ENCODE measurements at regions of chr2 and their contacts with region 1.

Region 1: GRCh38 chr2:133780099-133780839 is 212.0 kb upstream of the NCKAP5 start:
- DNase-seq: peak in 3 of 5 donors; percentile 32 to 45 (median 42)
- ATAC-seq: peak in 3 of 4 donors; percentile 46 to 74 (median 50)
- H3K4me3 ChIP-seq: no peak overlapping the region
- H3K27ac ChIP-seq: no peak overlapping the region
- H3K4me1 ChIP-seq: peaks cover 0 to 8% (median under 1%) of the 10 kb centered on the region in 12 donors
- H3K27me3 ChIP-seq: no peaks in the 10 kb centered on the region
- CTCF ChIP-seq: peak; percentile 57 to 87 (median 74)
- POLR2A ChIP-seq: no peak

Region 2: GRCh38 chr2:133266041-133266925 is 514.0 kb before region 1 on chr2:
- intact Hi-C with region 1: loop called in 2 of 10 experiments (anchors 5 to 10 kb)
- DNase-seq: peak in 1 of 5 donors; percentile 38
- ATAC-seq: peak; percentile 36 to 57 (median 50)
- H3K4me3 ChIP-seq: peak overlapping the region; percentile 26 to 60 (median 48)
- H3K27ac ChIP-seq: peak overlapping the region in 4 of 12 donors; percentile 15 to 46 (median 40)
- H3K4me1 ChIP-seq: peaks cover 0 to 27% (median 0%) of the 10 kb centered on the region in 12 donors
- H3K27me3 ChIP-seq: peaks cover 0 to 10% (median 0%) of the 10 kb centered on the region in 9 donors
- CTCF ChIP-seq: no peak
- POLR2A ChIP-seq: no peak

Region 3: GRCh38 chr2:133434962-133435668 is 345.2 kb before region 1 on chr2:
- intact Hi-C with region 1: loop called in 1 of 10 experiments (anchors 10 kb)
- DNase-seq: peak; percentile 57 to 85 (median 74)
- ATAC-seq: peak; percentile 96 to 99 (median 98)
- H3K4me3 ChIP-seq: no peak overlapping the region
- H3K27ac ChIP-seq: peak overlapping the region in 5 of 12 donors; percentile 15 to 64 (median 28)
- H3K4me1 ChIP-seq: peaks cover 0 to 23% (median 4%) of the 10 kb centered on the region in 12 donors
- H3K27me3 ChIP-seq: no peaks in the 10 kb centered on the region
- CTCF ChIP-seq: peak in 5 of 12 donors; percentile 11 to 27 (median 19)
- POLR2A ChIP-seq: no peak

Region 4: GRCh38 chr2:133568172-133568571 is 212.1 kb before region 1 on chr2 and contains the start of gene NCKAP5:
- intact Hi-C with region 1: loop called in 8 of 10 experiments (anchors 2 to 10 kb)
- DNase-seq: peak in 2 of 5 donors; percentile 10 to 36
- ATAC-seq: peak; percentile 28 to 38 (median 30)
- H3K4me3 ChIP-seq: peak within 1 kb of the TSS in 11 of 12 donors; percentile 1 to 58 (median 44)
- H3K27ac ChIP-seq: peak within 1 kb of the TSS in 11 of 12 donors; percentile 36 to 73 (median 58)
- H3K4me1 ChIP-seq: peaks cover 0 to 25% (median 7%) of the 10 kb centered on the region in 12 donors
- H3K27me3 ChIP-seq: no peaks in the 10 kb centered on the region
- CTCF ChIP-seq: peak in 4 of 12 donors; percentile 11 to 24 (median 14)
- POLR2A ChIP-seq: no peak
- total RNA-seq, gene NCKAP5: 1.8 to 10.5 (median 6.3) TPM

Region 5: DNA sequence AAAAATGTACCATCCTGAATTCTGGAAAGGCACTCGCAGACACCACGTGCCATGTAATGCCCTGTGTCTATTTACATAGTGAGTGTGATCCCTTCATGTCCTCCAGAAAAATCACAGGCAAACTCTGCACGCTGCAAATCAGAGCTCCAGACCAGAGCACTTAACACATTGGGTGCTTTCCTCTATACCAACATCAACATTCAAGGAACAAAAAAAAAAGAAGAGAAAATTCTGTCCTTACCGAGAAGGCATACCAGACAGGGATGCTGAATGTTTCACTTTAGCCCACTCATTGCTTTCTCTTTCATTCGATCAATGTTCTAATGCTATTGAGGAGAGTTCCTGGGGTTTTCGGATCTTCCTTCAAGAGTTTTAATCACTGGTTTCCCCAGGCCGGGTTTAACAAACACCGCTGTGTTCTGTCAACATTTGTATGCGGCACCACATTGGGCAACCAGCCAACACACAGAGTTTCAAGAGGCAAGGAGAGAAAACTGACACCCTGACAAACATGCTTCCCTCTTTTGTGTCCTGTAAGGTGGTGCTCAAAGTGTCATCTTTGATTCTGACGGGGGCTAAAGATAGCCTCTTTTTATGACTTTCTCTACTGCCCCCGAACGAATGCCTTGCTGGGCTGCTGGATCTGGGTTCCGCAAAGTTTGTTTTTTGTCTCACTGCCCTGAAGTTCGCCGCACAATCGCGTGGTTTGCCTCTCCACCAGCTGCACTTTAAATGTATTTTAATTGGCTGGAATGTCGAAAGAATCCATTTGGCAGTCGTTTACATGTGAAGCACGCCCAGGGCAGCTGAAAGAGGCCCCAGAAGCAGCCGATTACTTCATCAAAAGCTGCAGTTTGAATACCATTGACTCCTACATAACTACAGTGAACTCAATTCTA is 105.6 kb before region 1 on chr2:
- intact Hi-C with region 1: loop called in 2 of 10 experiments (anchors 5 kb)
- DNase-seq: peak in 4 of 5 donors; percentile 33 to 70 (median 42)
- ATAC-seq: peak; percentile 47 to 75 (median 60)
- H3K4me3 ChIP-seq: peak overlapping the region in 11 of 12 donors; percentile 1 to 54 (median 36)
- H3K27ac ChIP-seq: peak overlapping the region; percentile 10 to 89 (median 74)
- H3K4me1 ChIP-seq: peaks cover 0 to 43% (median 20%) of the 10 kb centered on the region in 12 donors
- H3K27me3 ChIP-seq: no peaks in the 10 kb centered on the region
- CTCF ChIP-seq: no peak
- POLR2A ChIP-seq: no peak

Region 6: GRCh38 chr2:133690780-133691179 is 89.5 kb before region 1 on chr2:
- intact Hi-C with region 1: no loop called
- DNase-seq: no peak
- ATAC-seq: no peak
- H3K4me3 ChIP-seq: no peak overlapping the region
- H3K27ac ChIP-seq: no peak overlapping the region
- H3K4me1 ChIP-seq: no peaks in the 10 kb centered on the region
- H3K27me3 ChIP-seq: no peaks in the 10 kb centered on the region
- CTCF ChIP-seq: no peak
- POLR2A ChIP-seq: no peak

Region 7: DNA sequence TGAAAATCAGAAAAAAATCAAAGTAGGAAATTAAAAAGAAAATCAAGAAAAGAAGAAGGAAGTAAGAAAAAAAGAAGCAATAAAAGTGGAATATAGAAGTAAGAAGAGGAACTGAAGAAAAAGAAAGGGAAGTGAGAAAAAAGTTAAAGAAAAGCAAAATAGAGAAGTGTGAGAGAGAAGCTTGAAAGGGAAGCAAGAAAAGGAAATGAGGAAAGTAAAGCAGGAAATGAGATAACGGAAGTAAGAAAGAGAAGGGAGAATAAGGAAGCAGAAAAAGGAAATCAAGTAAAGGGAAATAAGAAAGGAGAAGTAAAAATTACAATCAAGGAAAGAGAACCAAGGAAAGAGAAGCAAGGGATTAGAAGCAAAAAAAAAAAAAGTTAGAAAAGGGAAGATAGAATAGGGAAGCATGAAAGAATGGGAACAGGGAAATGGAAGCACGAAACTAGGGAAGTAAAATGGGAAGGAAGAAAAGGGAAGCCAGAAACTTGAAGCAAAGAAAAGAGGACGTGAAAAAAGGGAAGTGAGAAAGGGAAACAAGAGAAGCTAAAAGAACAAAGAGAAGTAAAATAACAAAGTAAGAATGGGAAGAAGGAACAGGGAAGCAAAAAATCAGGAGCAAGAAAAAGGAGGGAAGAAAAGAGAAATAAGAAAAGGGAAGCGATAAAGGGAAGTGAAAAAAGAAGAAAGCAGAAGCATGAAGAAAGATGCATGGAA is 31.3 kb after region 1 on chr2:
- intact Hi-C with region 1: no loop called
- DNase-seq: no peak
- ATAC-seq: no peak
- H3K4me3 ChIP-seq: no peak overlapping the region
- H3K27ac ChIP-seq: no peak overlapping the region
- H3K4me1 ChIP-seq: no peaks in the 10 kb centered on the region
- H3K27me3 ChIP-seq: no peaks in the 10 kb centered on the region
- CTCF ChIP-seq: no peak
- POLR2A ChIP-seq: no peak

Region 8: DNA sequence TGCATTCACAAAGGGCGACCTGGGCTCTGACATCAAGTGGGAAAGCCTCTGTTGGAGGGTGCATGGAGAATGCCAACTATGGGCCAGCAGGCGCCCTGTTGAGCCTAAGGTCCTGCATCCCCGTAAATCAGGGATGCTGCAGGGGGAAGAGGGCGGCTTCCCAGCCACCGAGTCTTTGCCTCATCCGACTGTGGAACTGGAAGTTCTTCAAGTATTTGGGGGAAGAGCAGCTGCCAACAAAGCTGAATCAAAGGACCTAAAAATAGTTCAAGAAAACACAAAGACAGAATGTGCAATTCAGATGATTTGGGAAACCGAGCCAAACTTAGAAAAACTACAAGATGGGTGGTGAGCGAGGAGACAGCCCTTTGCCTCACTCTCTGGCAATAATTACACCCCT is 192.5 kb after region 1 on chr2:
- intact Hi-C with region 1: no loop called
- DNase-seq: peak in 1 of 5 donors; percentile 33
- ATAC-seq: peak; percentile 30 to 57 (median 42)
- H3K4me3 ChIP-seq: no peak overlapping the region
- H3K27ac ChIP-seq: no peak overlapping the region
- H3K4me1 ChIP-seq: peaks cover 0 to 32% (median 7%) of the 10 kb centered on the region in 12 donors
- H3K27me3 ChIP-seq: no peaks in the 10 kb centered on the region
- CTCF ChIP-seq: no peak
- POLR2A ChIP-seq: no peak

Region 9: DNA sequence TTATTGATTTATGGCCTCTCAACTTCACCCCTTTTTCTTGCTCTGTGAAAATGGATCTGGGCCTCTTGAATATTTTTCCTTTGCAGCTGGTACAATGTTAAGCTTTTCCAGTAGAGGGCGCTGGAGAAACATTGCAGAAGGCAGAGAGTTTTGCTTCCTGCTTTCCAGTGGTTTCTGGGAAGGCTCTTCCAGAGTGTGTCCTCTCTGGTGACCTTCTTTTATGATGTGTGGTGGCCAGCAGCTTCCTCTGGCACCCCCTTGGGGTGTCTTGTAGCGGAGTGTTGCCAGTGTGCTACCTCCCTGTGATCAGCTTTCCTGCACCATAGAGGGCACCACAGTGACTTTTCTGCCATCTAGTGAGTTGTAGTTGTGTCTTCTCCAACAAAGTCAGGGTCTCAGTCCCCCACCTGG is 448.2 kb after region 1 on chr2:
- intact Hi-C with region 1: no loop called
- DNase-seq: no peak
- ATAC-seq: peak in 2 of 4 donors; percentile 28 to 35
- H3K4me3 ChIP-seq: no peak overlapping the region
- H3K27ac ChIP-seq: no peak overlapping the region
- H3K4me1 ChIP-seq: peaks cover 0 to 52% (median 31%) of the 10 kb centered on the region in 12 donors
- H3K27me3 ChIP-seq: no peaks in the 10 kb centered on the region
- CTCF ChIP-seq: peak in 11 of 12 donors; percentile 22 to 49 (median 34)
- POLR2A ChIP-seq: no peak

Measured in heart left ventricle (tissue), 16 donors.